H1 (cell line): ENCODE measurements at regions of chr10 and their contacts with region 1.

Region 1: GRCh38 chr10:69408318-69409175 is 8.2 kb downstream of the TACR2 start:
- DNase-seq: peak; percentile 81 to 95
- H3K4me3 ChIP-seq: peak overlapping the region in 1 of 4 experiments; percentile 47; a peak in 2 of 8 replicates
- H3K27ac ChIP-seq: no peak overlapping the region
- H3K4me1 ChIP-seq: peaks cover 0 to 10% (median 7%) of the 10 kb centered on the region in 4 experiments; a peak in 6 of 7 replicates
- H3K27me3 ChIP-seq: no peaks in the 10 kb centered on the region
- CTCF ChIP-seq: peak; percentile 43 to 71 (median 64)
- EP300 ChIP-seq: no peak
- POLR2A ChIP-seq: no peak
- RAD21 ChIP-seq: peak; percentile 37

Region 2: GRCh38 chr10:69232252-69232651 is 176.3 kb before region 1 on chr10:
- CTCF ChIA-PET with region 1: interaction called, 66 read pairs
- POLR2A ChIA-PET with region 1: interaction called, 4 read pairs
- DNase-seq: peak in 1 of 2 experiments; percentile 47
- H3K4me3 ChIP-seq: no peak overlapping the region
- H3K27ac ChIP-seq: no peak overlapping the region
- H3K4me1 ChIP-seq: peaks cover 0 to 13% (median 3%) of the 10 kb centered on the region in 4 experiments; a peak in 5 of 7 replicates
- H3K27me3 ChIP-seq: no peaks in the 10 kb centered on the region
- CTCF ChIP-seq: no peak
- EP300 ChIP-seq: no peak
- POLR2A ChIP-seq: no peak
- RAD21 ChIP-seq: no peak

Region 3: DNA sequence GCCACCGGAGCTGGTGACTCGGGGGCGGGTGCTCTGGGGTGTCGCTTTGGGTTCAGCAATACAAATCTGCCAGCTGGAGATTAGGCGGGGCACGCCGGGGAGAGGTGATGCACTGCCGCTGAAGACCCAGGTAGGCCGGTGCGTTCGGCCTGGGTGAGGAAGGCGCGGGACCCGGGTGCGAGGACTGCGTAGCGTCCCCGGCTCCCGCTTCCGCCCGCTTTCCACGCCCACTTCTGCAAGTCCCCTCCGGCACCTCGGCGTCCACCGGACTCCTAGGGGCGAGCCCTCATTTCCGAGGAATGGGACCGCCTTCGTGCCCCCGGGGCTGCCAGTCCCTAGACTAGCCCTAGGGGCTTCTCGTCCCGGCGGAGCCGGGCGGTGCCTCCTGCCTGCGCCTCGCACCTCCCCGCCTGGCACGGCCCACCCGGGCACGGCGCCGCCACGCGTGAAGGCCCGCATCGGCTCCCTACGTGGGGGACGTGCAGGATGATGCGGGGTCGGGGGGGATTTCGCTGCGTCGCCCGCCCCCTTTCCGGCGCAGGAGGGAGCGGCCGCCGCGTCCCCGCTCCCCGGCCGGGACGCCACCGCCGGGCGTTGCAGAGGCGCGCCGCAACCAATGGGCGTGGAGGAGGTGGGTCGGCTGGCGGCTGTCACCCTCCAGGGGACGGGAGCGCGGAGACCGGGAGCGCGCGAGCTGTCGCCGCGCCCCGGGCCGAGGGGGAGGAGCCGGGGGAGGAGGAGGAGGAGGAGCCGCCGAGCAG is 90.3 kb before region 1 on chr10:
- CTCF ChIA-PET with region 1: interaction called, 12 read pairs
- POLR2A ChIA-PET with region 1: no interaction called
- DNase-seq: peak; percentile 29 to 88
- H3K4me3 ChIP-seq: peak overlapping the region; percentile 78 to 98 (median 91)
- H3K27ac ChIP-seq: peak overlapping the region; percentile 29; the same call in 1 of the 2 replicates
- H3K4me1 ChIP-seq: peaks cover 16 to 38% (median 19%) of the 10 kb centered on the region in 4 experiments
- H3K27me3 ChIP-seq: no peaks in the 10 kb centered on the region
- CTCF ChIP-seq: no peak
- EP300 ChIP-seq: no peak
- POLR2A ChIP-seq: 0 out of 3 replicates have a peak, but pooled peaks of 1 of the 2 experiments have one; percentile 18
- RAD21 ChIP-seq: no peak; a peak in 1 of 4 replicates

Region 4: DNA sequence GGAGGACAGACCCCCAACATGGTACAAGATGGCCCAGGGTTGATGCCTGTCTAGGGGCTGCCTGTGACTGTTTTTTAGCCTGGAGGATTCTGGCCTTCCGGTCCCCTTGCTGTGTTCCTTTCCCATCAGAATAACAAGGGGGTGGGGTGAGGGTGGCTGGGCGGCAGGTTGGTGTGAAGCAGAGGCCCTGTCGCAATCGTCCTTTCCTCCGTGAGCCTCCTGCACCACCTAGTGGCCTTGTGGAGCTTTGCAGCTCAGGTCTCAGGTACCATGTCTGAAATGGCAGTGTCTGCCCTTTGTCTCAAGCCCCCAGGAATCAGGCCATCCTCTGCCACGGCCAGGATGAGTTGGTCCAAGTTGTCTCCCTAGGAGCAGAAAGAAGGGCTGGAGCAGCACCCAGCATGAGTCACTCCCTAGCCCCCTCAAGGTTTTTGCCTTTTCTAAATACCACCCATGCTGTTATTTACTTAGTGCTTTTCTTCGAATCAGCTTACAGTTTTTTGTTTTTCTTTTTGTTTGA is 16.0 kb before region 1 on chr10:
- CTCF ChIA-PET with region 1: interaction called, 69 read pairs
- POLR2A ChIA-PET with region 1: interaction called, 4 read pairs
- DNase-seq: peak; percentile 80 to 91
- H3K4me3 ChIP-seq: no peak overlapping the region
- H3K27ac ChIP-seq: no peak overlapping the region; the same call in 1 of the 2 replicates
- H3K4me1 ChIP-seq: peaks cover 8 to 21% (median 15%) of the 10 kb centered on the region in 4 experiments
- H3K27me3 ChIP-seq: no peaks in the 10 kb centered on the region
- CTCF ChIP-seq: peak; percentile 89 to 99 (median 99)
- EP300 ChIP-seq: no peak
- POLR2A ChIP-seq: no peak; a peak in 2 of 3 replicates
- RAD21 ChIP-seq: peak; percentile 99

Region 5: DNA sequence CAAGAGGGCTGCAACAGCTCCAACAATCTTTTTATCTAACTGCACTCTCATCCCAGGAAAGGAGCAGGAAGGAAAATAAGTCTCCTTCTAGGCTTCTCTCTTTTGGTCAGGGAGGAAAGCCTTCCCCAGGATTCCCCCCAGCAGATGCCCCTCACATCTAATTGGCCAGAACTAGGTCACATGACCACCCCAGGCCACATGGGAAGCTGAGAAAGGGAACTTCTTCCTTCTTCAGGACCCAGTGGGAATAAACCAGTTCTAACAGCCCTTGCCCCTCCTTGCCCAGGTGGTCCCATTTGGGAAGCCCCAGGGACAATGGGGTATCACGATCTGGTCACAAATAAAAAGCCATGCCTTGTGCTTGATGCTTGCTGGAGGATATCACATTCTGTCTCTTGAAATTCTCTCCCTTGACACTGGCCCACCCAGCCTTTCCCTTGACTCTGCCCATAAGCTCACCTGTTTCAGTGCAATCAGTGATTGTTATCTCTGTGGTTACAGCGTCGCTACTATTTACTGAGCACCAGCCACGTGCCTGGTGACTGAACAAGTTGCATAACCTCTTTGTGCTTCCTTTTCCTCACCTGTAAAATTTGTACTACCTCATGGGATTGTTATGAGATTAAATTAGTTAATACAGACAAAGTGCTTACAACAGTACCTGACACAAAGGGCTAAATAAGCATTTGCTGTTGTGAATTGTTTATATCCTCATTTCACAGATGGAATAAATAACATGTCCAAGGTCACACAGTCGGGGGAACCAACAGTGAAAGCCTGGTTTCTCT is 17.2 kb after region 1 on chr10:
- CTCF ChIA-PET with region 1: interaction called, 28 read pairs
- POLR2A ChIA-PET with region 1: interaction called, 4 read pairs
- DNase-seq: no peak
- H3K4me3 ChIP-seq: no peak overlapping the region
- H3K27ac ChIP-seq: no peak overlapping the region
- H3K4me1 ChIP-seq: no peaks in the 10 kb centered on the region
- H3K27me3 ChIP-seq: no peaks in the 10 kb centered on the region
- CTCF ChIP-seq: no peak
- EP300 ChIP-seq: no peak
- POLR2A ChIP-seq: no peak
- RAD21 ChIP-seq: no peak

Region 6: DNA sequence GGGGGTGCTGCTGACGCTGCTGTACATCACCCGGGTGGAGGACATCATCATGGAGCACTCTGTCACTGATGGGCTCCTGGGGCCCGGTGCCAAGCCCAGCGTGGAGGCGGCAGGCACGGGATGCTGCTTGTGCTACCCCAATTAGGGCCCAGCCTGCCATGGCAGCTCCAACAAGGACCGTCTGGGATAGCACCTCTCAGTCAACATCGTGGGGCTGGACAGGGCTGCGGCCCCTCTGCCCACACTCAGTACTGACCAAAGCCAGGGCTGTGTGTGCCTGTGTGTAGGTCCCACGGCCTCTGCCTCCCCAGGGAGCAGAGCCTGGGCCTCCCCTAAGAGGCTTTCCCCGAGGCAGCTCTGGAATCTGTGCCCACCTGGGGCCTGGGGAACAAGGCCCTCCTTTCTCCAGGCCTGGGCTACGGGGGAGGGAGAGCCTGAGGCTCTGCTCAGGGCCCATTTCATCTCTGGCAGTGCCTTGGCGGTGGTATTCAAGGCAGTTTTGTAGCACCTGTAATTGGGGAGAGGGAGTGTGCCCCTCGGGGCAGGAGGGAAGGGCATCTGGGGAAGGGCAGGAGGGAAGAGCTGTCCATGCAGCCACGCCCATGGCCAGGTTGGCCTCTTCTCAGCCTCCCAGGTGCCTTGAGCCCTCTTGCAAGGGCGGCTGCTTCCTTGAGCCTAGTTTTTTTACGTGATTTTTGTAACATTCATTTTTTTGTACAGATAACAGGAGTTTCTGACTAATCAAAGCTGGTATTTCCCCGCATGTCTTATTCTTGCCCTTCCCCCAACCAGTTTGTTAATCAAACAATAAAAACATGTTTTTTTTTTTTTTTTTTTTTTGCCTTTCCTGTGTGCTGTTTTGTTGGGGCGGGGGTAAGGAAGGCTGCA is 98.5 kb after region 1 on chr10:
- CTCF ChIA-PET with region 1: interaction called, 42 read pairs
- POLR2A ChIA-PET with region 1: interaction called, 5 read pairs
- DNase-seq: no peak
- H3K4me3 ChIP-seq: peak overlapping the region in 1 of 4 experiments; percentile 29; a peak in 1 of 8 replicates
- H3K27ac ChIP-seq: no peak overlapping the region
- H3K4me1 ChIP-seq: peaks cover 0 to 6% (median 5%) of the 10 kb centered on the region in 4 experiments; a peak in 5 of 7 replicates
- H3K27me3 ChIP-seq: no peaks in the 10 kb centered on the region
- CTCF ChIP-seq: no peak
- EP300 ChIP-seq: no peak
- POLR2A ChIP-seq: no peak
- RAD21 ChIP-seq: no peak

Region 7: GRCh38 chr10:69662901-69663300 is 254.4 kb after region 1 on chr10:
- CTCF ChIA-PET with region 1: no interaction called
- POLR2A ChIA-PET with region 1: no interaction called
- DNase-seq: no peak
- H3K4me3 ChIP-seq: no peak overlapping the region
- H3K27ac ChIP-seq: no peak overlapping the region
- H3K4me1 ChIP-seq: peaks cover 0 to 8% (median 1%) of the 10 kb centered on the region in 4 experiments; a peak in 3 of 7 replicates
- H3K27me3 ChIP-seq: no peaks in the 10 kb centered on the region; a peak in 1 of 7 replicates
- CTCF ChIP-seq: peak in 1 of 3 experiments; percentile 16; a peak in 1 of 4 replicates
- EP300 ChIP-seq: no peak
- POLR2A ChIP-seq: no peak
- RAD21 ChIP-seq: no peak